ENCODE measurements at regions of chr14 and their contacts with region 1.

Region 1: GRCh38 chr14:81170104-81170828 is 50.5 kb downstream of the GTF2A1 start:
- ATAC-seq: peak; percentile 98 to 99 (median 99)
- H3K4me3 ChIP-seq: peak overlapping the region; percentile 33 to 58 (median 44)
- H3K27ac ChIP-seq: peak overlapping the region; percentile 77 to 88
- H3K4me1 ChIP-seq: peaks cover 0 to 6% of the 10 kb centered on the region in 2 donors

Region 2: DNA sequence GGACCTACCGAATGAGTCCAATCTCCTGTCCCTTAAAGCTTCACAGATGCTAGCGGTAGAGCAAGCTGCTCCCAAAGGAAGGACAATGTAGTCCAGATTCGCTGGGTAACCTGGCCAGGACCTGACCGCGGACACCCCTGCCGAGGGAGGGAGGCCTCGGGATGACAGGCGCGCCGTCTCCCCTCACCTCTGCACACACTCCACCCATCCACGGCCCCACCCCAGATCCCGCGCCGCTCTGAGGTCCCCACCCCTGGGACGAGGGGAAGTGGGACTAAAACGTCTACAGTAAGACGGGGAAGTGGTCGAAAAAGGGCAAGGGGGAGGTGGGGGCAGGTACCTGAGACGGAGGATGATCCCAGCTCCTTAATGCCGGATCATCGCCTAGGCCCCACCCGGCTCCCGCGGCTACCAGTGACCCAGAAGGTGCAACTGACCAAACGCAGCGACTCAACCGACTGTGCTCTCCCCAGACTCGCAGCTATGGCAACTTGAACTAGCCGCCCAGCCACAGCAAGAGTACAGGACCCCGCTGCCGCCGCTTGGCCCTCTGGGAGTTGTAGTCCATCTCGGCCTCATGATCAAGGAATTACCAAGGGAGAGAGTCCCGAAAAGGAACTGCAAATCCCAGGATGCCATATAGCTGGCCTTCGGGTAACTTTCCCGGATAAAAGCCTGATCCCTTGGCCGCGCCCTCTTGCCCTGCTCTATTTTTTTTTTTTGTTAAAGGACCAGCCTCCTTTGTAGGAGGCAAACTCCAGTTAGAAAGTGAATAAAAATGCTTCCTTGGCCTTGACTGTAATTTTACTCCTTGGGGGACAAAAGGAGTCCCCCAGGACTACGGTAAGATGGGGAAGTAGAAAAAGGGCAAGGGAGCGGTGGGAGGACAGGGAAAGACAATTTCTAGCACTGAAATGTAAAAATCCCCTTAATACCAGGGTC is 228.8 kb before region 1 on chr14 and contains the start of gene CEP128:
- in situ Hi-C with region 1: loop called in 1 of 9 experiments (anchors 10 kb)
- ATAC-seq: peak; percentile 99 to 100 (median 100)
- H3K4me3 ChIP-seq: peak within 1 kb of the TSS; percentile 41 to 84 (median 56)
- H3K27ac ChIP-seq: peak within 1 kb of the TSS in 1 of 2 donors; percentile 51
- H3K4me1 ChIP-seq: peaks cover 3 to 4% of the 10 kb centered on the region in 2 donors
- total RNA-seq, gene CEP128: 1.7 to 12.7 (median 5.2) TPM

Region 3: DNA sequence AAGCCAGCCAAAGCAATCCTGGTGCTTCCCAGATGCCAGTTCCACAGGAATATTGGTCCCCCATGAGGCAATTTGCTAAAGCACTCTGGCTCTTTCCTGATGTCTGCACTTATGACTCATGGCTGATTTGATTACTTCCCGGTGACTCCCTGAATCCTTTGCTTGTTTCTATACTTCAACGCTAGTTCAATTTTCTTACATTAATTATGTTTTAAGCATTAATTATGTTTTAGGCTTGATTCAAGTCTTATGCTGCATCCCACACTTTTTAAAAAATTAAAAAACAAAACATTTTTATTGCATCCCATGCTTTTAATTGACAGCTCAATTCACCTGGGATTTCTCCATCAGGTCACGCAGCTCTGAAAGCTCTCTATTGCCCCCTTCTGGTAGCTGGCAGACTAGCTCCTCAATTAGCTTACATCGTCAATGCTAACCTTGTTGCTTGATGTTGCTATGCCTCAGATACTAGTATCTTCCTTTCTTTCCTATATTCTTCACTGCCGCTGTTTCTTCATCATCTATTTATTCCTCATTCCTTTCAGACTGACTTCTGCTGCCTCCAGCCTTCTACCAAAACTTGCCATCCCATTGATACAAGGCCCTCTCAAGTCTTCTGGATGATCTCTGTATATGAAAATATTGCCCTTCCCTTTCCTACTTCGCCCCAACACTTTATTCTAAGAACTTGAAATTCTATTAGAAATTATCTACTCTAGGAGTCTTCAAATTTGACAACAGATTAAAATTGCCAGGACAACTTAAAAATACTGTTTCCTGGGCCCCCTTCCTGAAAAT is 182.8 kb before region 1 on chr14:
- in situ Hi-C with region 1: loop called in 3 of 9 experiments (anchors 10 to 25 kb)
- ATAC-seq: peak; percentile 72 to 99 (median 86)
- H3K4me3 ChIP-seq: no peak overlapping the region
- H3K27ac ChIP-seq: no peak overlapping the region
- H3K4me1 ChIP-seq: no peaks in the 10 kb centered on the region

Region 4: DNA sequence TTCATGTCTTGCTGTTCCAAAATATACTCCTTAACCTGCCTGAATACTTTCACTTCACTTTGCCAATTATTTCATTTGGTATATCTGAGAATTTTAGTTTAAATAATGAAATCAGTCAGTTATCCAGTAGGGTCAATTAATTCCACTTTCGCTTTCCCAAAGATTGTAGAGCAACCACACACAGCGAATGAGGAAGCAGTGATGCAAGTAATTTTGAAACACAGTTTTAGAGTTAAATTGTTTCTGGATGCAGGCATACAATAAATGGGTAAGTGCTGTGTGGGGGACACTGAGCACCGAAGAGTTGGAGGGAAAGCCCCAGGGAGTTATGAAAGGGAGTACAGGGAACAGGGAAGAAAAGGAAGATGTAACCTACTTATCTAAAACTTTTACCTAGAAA is 152.0 kb before region 1 on chr14:
- in situ Hi-C with region 1: loop called in 1 of 9 experiments (anchors 25 kb)
- ATAC-seq: no peak
- H3K4me3 ChIP-seq: no peak overlapping the region
- H3K27ac ChIP-seq: no peak overlapping the region
- H3K4me1 ChIP-seq: no peaks in the 10 kb centered on the region

Measured in motor neuron (in vitro differentiated cells).